ENCODE measurements at regions of chr2 and their contacts with region 1.

Region 1: GRCh38 chr2:191103774-191104173 is 47.0 kb downstream of the STAT4 start:
- DNase-seq: no peak
- ATAC-seq: peak; percentile 71
- H3K4me3 Mint-ChIP-seq: no peak overlapping the region
- H3K27ac Mint-ChIP-seq: no peak overlapping the region
- H3K4me1 Mint-ChIP-seq: peaks cover 64% of the 10 kb centered on the region
- H3K27me3 Mint-ChIP-seq: no peaks in the 10 kb centered on the region

Region 2: DNA sequence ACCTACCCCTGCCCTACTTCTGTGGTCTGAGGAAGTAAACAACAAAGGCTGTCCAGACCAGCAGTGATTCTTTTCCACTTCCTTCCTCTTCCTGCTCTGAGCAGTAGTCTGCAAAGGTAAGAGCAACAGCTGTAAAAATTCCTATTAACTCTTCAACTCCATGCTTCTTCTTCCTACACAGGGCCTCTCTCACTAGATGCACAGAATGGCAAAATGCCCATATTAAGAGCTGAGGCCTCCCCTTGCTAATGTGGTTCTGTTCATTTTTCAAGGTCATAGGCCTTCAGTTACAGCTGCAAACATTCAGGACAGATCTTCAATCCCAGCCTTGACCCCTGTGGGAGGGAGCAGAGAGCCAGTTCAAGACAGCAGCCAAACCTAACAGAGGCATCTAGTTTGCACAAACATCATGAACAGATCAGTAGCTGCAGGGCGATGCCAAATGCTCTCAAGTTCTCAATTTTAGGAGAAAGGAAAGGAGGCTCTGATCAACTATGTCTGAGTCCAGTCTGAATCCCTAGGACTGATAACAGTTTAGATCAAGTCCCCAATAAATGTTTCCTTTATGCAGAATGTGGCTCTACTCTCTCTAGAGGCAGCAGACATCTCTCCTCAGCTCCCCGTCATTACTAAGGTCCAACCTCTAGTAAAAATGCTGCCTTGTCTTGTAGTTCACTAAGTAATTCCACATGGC is 1544.0 kb before region 1 on chr2:
- CTCF ChIA-PET with region 1: no interaction called
- POLR2A ChIA-PET with region 1: no interaction called
- intact Hi-C with region 1: no loop called
- DNase-seq: no peak
- ATAC-seq: no peak
- H3K4me3 Mint-ChIP-seq: no peak overlapping the region
- H3K27ac Mint-ChIP-seq: no peak overlapping the region
- H3K4me1 Mint-ChIP-seq: peaks cover 9% of the 10 kb centered on the region
- H3K27me3 Mint-ChIP-seq: no peaks in the 10 kb centered on the region

Region 3: DNA sequence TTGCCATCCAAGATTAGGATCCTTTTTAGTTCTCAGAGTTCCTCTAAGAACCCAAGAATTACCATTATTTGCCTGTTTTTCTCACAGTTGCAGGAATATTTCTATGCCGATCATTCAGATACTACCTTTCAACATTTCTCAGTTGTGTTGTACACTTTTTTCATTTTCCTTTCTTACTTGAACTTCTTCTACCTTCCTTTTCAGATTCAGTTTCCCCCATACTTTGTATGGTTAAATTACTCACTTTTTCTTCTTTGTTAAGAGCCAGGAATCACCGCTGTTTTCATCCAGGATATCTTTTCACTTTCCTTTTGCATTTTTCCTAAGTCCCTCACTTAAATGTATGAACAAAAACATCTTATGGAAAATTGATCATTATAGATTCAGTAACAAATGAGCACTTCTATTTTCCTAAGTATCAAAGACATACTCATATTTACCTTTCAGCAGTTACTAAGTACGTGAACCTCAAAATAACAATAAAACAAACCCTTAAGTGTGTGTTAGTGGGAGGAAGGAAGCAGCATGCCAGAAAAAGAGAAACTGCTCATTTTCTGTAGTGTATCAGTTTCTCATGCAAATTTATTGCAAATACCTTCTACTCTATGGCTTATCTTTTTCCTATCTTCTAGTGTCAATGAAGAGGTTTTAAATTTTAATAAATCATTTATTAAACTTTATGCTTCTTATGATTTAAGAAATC is 25.5 kb before region 1 on chr2:
- CTCF ChIA-PET with region 1: no interaction called
- POLR2A ChIA-PET with region 1: no interaction called
- intact Hi-C with region 1: loop called in 1 of 2 experiments (anchors 1 kb)
- DNase-seq: no peak
- ATAC-seq: peak; percentile 81
- H3K4me3 Mint-ChIP-seq: peak overlapping the region; percentile 64
- H3K27ac Mint-ChIP-seq: peak overlapping the region; percentile 83
- H3K4me1 Mint-ChIP-seq: peaks cover 20% of the 10 kb centered on the region
- H3K27me3 Mint-ChIP-seq: no peaks in the 10 kb centered on the region

Region 4: GRCh38 chr2:191086706-191087105 is 17.1 kb before region 1 on chr2:
- CTCF ChIA-PET with region 1: interaction called, 6 read pairs
- POLR2A ChIA-PET with region 1: no interaction called
- intact Hi-C with region 1: loop called in 1 of 2 experiments (anchors 2 kb)
- DNase-seq: no peak
- ATAC-seq: no peak
- H3K4me3 Mint-ChIP-seq: no peak overlapping the region
- H3K27ac Mint-ChIP-seq: no peak overlapping the region
- H3K4me1 Mint-ChIP-seq: peaks cover 15% of the 10 kb centered on the region
- H3K27me3 Mint-ChIP-seq: no peaks in the 10 kb centered on the region